Sigmoid colon (tissue), 7 donors: ENCODE measurements at regions of chr2 and their contacts with region 1.

Region 1: GRCh38 chr2:9385841-9386240 is 37.5 kb downstream of the ITGB1BP1 start:
- DNase-seq: peak; percentile 26
- H3K4me3 ChIP-seq: no peak overlapping the region
- H3K27ac ChIP-seq: peak overlapping the region in 3 of 4 donors; percentile 74 to 77 (median 75)
- H3K4me1 ChIP-seq: peaks cover 0 to 34% (median 26%) of the 10 kb centered on the region in 4 donors
- H3K27me3 ChIP-seq: no peaks in the 10 kb centered on the region
- CTCF ChIP-seq: no peak
- EP300 ChIP-seq: no peak
- POLR2A ChIP-seq: no peak

Region 2: DNA sequence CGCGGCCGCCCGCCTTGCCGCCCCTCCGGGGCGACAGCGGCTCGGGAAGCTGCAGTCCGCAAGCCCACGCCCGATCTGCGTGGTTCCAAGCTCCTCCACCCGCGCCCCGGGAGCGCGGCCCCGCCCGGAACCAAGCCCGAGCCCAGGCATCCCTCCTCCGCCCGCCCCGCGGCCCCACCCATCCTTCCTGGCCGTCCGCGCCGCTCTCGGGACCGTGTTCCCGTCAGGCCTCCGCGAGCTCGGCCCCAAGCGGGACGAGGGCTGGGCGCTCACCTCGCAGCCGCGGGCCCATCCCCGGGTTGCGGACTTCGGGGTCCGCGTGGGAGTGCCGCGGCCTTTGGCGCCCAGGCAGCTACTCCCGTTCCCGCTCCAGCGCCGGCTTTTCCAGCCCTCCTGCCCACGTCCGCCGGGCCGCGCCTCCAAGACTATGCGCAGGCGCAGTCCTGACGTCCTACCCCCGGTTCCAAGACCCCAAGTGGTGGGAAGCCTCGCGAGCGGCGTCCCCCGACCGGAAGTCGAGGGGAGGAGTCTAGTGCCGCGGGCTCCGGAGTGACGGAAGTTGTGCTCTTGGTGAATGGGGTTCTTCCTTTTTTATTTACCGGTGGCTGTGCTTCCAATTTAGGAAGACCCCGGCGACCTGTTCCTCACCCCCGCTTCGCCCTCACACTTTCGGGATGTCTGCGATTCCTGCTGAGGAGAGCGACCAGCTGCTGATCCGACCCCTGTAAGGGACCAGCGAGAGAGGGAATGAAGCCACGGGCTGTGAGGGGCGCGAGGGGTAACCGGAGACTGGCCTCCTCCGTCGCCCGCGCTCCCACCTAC is 37.5 kb after region 1 on chr2 and contains the starts of genes CPSF3 and ITGB1BP1:
- intact Hi-C with region 1: loop called (anchors 2 kb)
- DNase-seq: peak; percentile 99
- H3K4me3 ChIP-seq: peak within 1 kb of the TSS; percentile 84 to 99 (median 93)
- H3K27ac ChIP-seq: peak within 1 kb of the TSS; percentile 94 to 97 (median 96)
- H3K4me1 ChIP-seq: peaks cover 0 to 38% (median 33%) of the 10 kb centered on the region in 4 donors
- H3K27me3 ChIP-seq: no peaks in the 10 kb centered on the region
- CTCF ChIP-seq: peak in 1 of 4 experiments; percentile 31
- EP300 ChIP-seq: peak in 1 of 4 donors; percentile 69
- POLR2A ChIP-seq: no peak
- total RNA-seq, gene CPSF3: 22.9 to 33.5 (median 27.5) TPM
- total RNA-seq, gene ITGB1BP1: 52.3 to 75.6 (median 61.6) TPM

Region 3: GRCh38 chr2:9708683-9709538 is 323.1 kb after region 1 on chr2:
- intact Hi-C with region 1: no loop called
- DNase-seq: no peak
- H3K4me3 ChIP-seq: no peak overlapping the region
- H3K27ac ChIP-seq: no peak overlapping the region
- H3K4me1 ChIP-seq: no peaks in the 10 kb centered on the region
- H3K27me3 ChIP-seq: no peaks in the 10 kb centered on the region
- CTCF ChIP-seq: no peak
- EP300 ChIP-seq: no peak
- POLR2A ChIP-seq: no peak